HepG2 (cell line): ENCODE measurements at regions of chr22 and their contacts with region 1.

Region 1: GRCh38 chr22:46367707-46368191 is 32.2 kb downstream of the TRMU start:
- DNase-seq: peak; percentile 44
- ATAC-seq: peak; percentile 75
- H3K4me3 ChIP-seq: no peak overlapping the region
- H3K27ac ChIP-seq: no peak overlapping the region
- H3K4me1 ChIP-seq: peaks cover 40% of the 10 kb centered on the region
- H3K27me3 ChIP-seq: no peaks in the 10 kb centered on the region
- CTCF ChIP-seq: peak; percentile 100
- EP300 ChIP-seq: no peak
- POLR2A ChIP-seq: no peak
- RAD21 ChIP-seq: peak; percentile 98

Region 2: DNA sequence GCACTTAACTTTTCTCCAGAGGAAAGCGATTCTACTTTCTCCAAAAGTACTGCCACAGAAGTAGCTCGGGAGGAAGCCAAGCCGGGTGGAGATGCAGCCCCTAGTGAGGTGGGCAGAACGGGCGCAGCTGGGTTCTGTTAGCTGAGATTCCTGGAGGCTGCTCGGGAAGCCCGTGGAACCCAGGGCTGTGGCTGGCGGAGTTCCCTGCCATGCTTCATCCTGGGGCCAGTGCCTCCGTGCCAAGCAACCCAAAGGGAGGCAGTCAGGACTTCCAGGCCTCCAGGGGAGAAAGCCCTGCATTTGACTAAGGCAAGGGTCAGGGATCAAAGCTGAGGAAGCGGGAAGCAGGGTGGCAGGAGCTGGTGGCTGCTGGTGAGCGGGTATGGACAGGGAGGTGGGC is 39.0 kb before region 1 on chr22:
- CTCF ChIA-PET with region 1: no interaction called
- POLR2A ChIA-PET with region 1: no interaction called
- in situ Hi-C with region 1: no loop called
- intact Hi-C with region 1: no loop called
- DNase-seq: no peak
- ATAC-seq: no peak
- H3K4me3 ChIP-seq: no peak overlapping the region
- H3K27ac ChIP-seq: no peak overlapping the region
- H3K4me1 ChIP-seq: no peaks in the 10 kb centered on the region
- H3K27me3 ChIP-seq: no peaks in the 10 kb centered on the region
- CTCF ChIP-seq: no peak
- EP300 ChIP-seq: no peak
- POLR2A ChIP-seq: no peak
- RAD21 ChIP-seq: no peak

Region 3: DNA sequence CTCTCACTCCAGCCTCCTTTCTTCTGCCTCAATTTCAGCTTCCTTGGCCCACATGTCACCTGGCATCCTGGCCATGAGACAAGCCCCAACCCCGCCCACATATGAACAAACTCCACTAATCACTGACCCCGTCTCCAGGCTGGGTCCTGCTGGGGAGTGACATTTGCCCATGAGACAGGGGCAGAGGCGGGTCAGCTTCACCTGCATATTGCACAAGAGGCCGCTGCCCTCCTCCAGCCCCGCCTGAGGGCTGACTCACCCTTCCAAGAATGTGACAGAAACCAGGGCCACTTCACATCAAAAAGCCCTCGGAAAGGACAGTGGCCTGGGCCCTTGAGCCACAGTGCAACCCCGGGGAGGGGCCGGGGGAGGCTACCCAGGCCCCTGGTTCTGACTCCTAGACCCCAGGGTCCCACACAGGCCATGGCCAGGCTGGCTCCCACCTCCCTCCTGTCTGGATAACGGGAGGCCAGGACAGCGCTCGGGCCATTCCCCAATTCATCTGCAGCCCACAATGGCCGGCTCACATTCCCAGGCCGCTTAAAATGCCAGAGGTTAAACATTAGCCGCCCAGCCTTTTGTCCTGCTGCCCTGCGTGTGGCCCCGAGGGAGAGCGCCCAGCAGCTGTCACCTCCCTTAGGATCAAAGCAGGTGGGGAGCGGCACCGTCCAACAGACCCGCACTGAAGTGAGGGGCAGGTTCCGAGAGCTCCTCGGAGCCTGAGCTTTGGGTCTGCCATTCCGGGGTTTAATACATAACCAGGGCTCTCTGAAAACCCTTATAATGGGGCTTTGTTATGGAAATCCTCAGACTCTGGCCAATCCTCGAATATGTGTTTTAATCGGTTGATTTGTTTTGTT is 10.0 kb after region 1 on chr22:
- CTCF ChIA-PET with region 1: no interaction called
- POLR2A ChIA-PET with region 1: interaction called, 33 read pairs
- in situ Hi-C with region 1: no loop called
- intact Hi-C with region 1: no loop called
- DNase-seq: peak; percentile 96
- ATAC-seq: peak; percentile 88
- H3K4me3 ChIP-seq: peak overlapping the region; percentile 54 to 78 (median 57)
- H3K27ac ChIP-seq: peak overlapping the region; percentile 93
- H3K4me1 ChIP-seq: peaks cover 58% of the 10 kb centered on the region
- H3K27me3 ChIP-seq: no peaks in the 10 kb centered on the region; a peak in 1 of 5 replicates
- CTCF ChIP-seq: peak; percentile 38
- EP300 ChIP-seq: peak; percentile 88 to 90
- POLR2A ChIP-seq: peak; percentile 52 to 55
- RAD21 ChIP-seq: no peak; the same call in 1 of the 2 replicates

Region 4: GRCh38 chr22:46390652-46391301 is 23.0 kb after region 1 on chr22:
- CTCF ChIA-PET with region 1: interaction called, 48 read pairs
- POLR2A ChIA-PET with region 1: interaction called, 7 read pairs
- in situ Hi-C with region 1: no loop called
- intact Hi-C with region 1: loop called (anchors 1 kb)
- DNase-seq: peak; percentile 64
- ATAC-seq: peak; percentile 86
- H3K4me3 ChIP-seq: peak overlapping the region in 2 of 3 experiments; percentile 47 to 58; a peak in 4 of 6 replicates
- H3K27ac ChIP-seq: no peak overlapping the region
- H3K4me1 ChIP-seq: peaks cover 21% of the 10 kb centered on the region
- H3K27me3 ChIP-seq: no peaks in the 10 kb centered on the region
- CTCF ChIP-seq: peak; percentile 89
- EP300 ChIP-seq: no peak
- POLR2A ChIP-seq: no peak
- RAD21 ChIP-seq: peak; percentile 95

Region 5: GRCh38 chr22:46444390-46444854 is 76.7 kb after region 1 on chr22:
- CTCF ChIA-PET with region 1: interaction called, 8 read pairs
- POLR2A ChIA-PET with region 1: interaction called, 3 read pairs
- in situ Hi-C with region 1: loop called (anchors 5 kb)
- intact Hi-C with region 1: no loop called
- DNase-seq: peak; percentile 65
- ATAC-seq: peak; percentile 96
- H3K4me3 ChIP-seq: peak overlapping the region; percentile 14 to 62 (median 34); a peak in 5 of 6 replicates
- H3K27ac ChIP-seq: no peak overlapping the region
- H3K4me1 ChIP-seq: peaks cover 31% of the 10 kb centered on the region
- H3K27me3 ChIP-seq: no peaks in the 10 kb centered on the region; a peak in 1 of 5 replicates
- CTCF ChIP-seq: peak; percentile 73
- EP300 ChIP-seq: no peak
- POLR2A ChIP-seq: no peak
- RAD21 ChIP-seq: peak; percentile 72; the same call in 1 of the 2 replicates

Region 6: DNA sequence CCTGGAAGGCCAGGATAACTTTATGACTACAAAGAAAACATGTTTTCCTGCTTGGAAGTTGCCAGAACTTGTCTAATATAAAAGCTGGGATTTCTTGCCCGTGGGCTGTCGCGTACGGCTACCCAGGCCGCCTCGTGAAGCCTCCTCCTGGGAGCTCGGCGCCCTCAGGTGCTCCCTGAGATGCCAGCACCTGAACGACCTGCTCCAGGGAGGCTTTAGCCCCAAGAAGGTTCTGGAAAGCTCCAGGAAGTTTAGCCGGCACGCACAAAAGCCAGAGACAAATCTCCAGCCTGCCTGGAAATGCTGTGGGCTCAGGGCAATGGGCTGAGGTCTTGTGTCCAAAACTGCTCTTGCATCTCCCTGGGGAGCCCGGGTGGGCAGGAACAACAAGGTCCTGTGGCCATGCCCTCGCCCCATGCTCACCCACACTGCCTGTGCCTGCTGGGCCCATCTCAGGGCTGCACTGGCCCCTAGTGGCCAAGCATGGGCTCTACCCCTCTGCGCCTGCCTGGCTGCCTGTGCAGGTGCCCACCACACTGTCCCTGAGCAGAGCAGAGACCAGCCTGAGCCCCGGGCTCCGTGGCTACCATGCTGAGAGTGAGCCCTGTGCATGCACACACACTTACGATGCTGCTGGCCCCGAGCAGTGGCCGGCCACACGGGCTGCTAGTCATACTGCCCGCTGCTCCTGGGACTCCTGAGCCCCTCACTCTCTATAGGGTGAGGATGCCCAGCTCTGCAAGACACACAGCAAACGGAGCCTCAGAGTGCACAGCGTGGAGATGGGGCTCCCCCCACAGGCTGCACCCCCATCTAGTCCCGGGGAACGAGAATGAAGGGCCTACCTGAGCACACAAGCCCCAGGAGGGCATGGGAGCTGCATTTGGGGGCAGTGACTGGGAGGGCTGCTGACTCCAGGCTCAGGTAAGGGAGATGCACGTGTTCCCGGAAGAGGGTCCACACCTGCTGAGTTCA is 174.5 kb after region 1 on chr22:
- CTCF ChIA-PET with region 1: interaction called, 15 read pairs
- POLR2A ChIA-PET with region 1: no interaction called
- in situ Hi-C with region 1: loop called (anchors 5 kb)
- intact Hi-C with region 1: loop called (anchors 1 kb)
- DNase-seq: peak; percentile 45
- ATAC-seq: peak; percentile 98
- H3K4me3 ChIP-seq: no peak overlapping the region; a peak in 1 of 6 replicates
- H3K27ac ChIP-seq: no peak overlapping the region
- H3K4me1 ChIP-seq: peaks cover 44% of the 10 kb centered on the region
- H3K27me3 ChIP-seq: peaks cover 4 to 24% of the 10 kb centered on the region in 2 experiments
- CTCF ChIP-seq: peak; percentile 99
- EP300 ChIP-seq: 0 out of 4 replicates have a peak, but pooled peaks of 1 of the 2 experiments have one; percentile 36
- POLR2A ChIP-seq: no peak
- RAD21 ChIP-seq: peak; percentile 96